ENCODE measurements at regions of chr11 and their contacts with region 1.

Region 1: GRCh38 chr11:4094348-4095291 is at the start of gene RRM1:
- DNase-seq: peak; percentile 88 to 96 (median 94)
- ATAC-seq: peak; percentile 95
- H3K4me3 ChIP-seq: peak within 1 kb of the TSS; percentile 83
- H3K4me3 Mint-ChIP-seq: peak within 1 kb of the TSS; percentile 92 to 99 (median 97)
- H3K27ac ChIP-seq: peak within 1 kb of the TSS; percentile 97
- H3K27ac Mint-ChIP-seq: peak within 1 kb of the TSS; percentile 94 to 99 (median 98)
- H3K4me1 ChIP-seq: peaks cover 46 to 63% of the 10 kb centered on the region in 2 donors
- H3K4me1 Mint-ChIP-seq: peaks cover 63 to 90% (median 84%) of the 10 kb centered on the region in 7 donors
- H3K27me3 ChIP-seq: no peaks in the 10 kb centered on the region
- H3K27me3 Mint-ChIP-seq: no peaks in the 10 kb centered on the region
- total RNA-seq, gene RRM1: 33.6 to 140 (median 40.3) TPM

Region 2: GRCh38 chr11:3841426-3842350 is 252.9 kb before region 1 on chr11:
- CTCF ChIA-PET with region 1: interaction called, 4 read pairs
- POLR2A ChIA-PET with region 1: interaction called, 3 read pairs
- intact Hi-C with region 1: loop called (anchors 1 kb)
- DNase-seq: peak; percentile 82 to 98 (median 95)
- ATAC-seq: peak; percentile 84
- H3K4me3 ChIP-seq: peak overlapping the region; percentile 51
- H3K4me3 Mint-ChIP-seq: peak overlapping the region; percentile 76 to 99 (median 91)
- H3K27ac ChIP-seq: peak overlapping the region; percentile 95
- H3K27ac Mint-ChIP-seq: peak overlapping the region; percentile 87 to 99 (median 97)
- H3K4me1 ChIP-seq: peaks cover 30 to 34% of the 10 kb centered on the region in 2 donors
- H3K4me1 Mint-ChIP-seq: peaks cover 19 to 64% (median 54%) of the 10 kb centered on the region in 7 donors
- H3K27me3 ChIP-seq: no peaks in the 10 kb centered on the region
- H3K27me3 Mint-ChIP-seq: no peaks in the 10 kb centered on the region

Region 3: GRCh38 chr11:3959015-3959919 is 135.4 kb before region 1 on chr11:
- CTCF ChIA-PET with region 1: no interaction called
- POLR2A ChIA-PET with region 1: no interaction called
- intact Hi-C with region 1: no loop called
- DNase-seq: no peak
- ATAC-seq: no peak
- H3K4me3 ChIP-seq: no peak overlapping the region
- H3K4me3 Mint-ChIP-seq: peak overlapping the region in 5 of 10 donors; percentile 7 to 34 (median 26)
- H3K27ac ChIP-seq: no peak overlapping the region
- H3K27ac Mint-ChIP-seq: peak overlapping the region in 4 of 9 donors; percentile 19 to 63 (median 52)
- H3K4me1 ChIP-seq: peaks cover 14 to 35% of the 10 kb centered on the region in 2 donors
- H3K4me1 Mint-ChIP-seq: peaks cover 58 to 93% (median 90%) of the 10 kb centered on the region in 7 donors
- H3K27me3 ChIP-seq: no peaks in the 10 kb centered on the region
- H3K27me3 Mint-ChIP-seq: no peaks in the 10 kb centered on the region

Region 4: GRCh38 chr11:4146070-4146771 is 51.6 kb after region 1 on chr11:
- CTCF ChIA-PET with region 1: no interaction called
- POLR2A ChIA-PET with region 1: no interaction called
- intact Hi-C with region 1: no loop called
- DNase-seq: no peak
- ATAC-seq: no peak
- H3K4me3 ChIP-seq: no peak overlapping the region
- H3K4me3 Mint-ChIP-seq: no peak overlapping the region
- H3K27ac ChIP-seq: no peak overlapping the region
- H3K27ac Mint-ChIP-seq: no peak overlapping the region
- H3K4me1 ChIP-seq: no peaks in the 10 kb centered on the region
- H3K4me1 Mint-ChIP-seq: peaks cover 0 to 2% (median 0%) of the 10 kb centered on the region in 7 donors
- H3K27me3 ChIP-seq: no peaks in the 10 kb centered on the region
- H3K27me3 Mint-ChIP-seq: no peaks in the 10 kb centered on the region

Region 5: GRCh38 chr11:4393209-4393857 is 298.7 kb after region 1 on chr11 and contains the start of gene TRIM21:
- CTCF ChIA-PET with region 1: no interaction called
- POLR2A ChIA-PET with region 1: no interaction called
- intact Hi-C with region 1: loop called in 1 of 2 experiments (anchors 10 kb)
- DNase-seq: peak; percentile 62 to 92 (median 87)
- ATAC-seq: peak; percentile 100
- H3K4me3 ChIP-seq: peak within 1 kb of the TSS; percentile 87
- H3K4me3 Mint-ChIP-seq: peak within 1 kb of the TSS; percentile 88 to 94 (median 90)
- H3K27ac ChIP-seq: peak within 1 kb of the TSS; percentile 89
- H3K27ac Mint-ChIP-seq: peak within 1 kb of the TSS; percentile 68 to 96 (median 93)
- H3K4me1 ChIP-seq: peaks cover 8 to 14% of the 10 kb centered on the region in 2 donors
- H3K4me1 Mint-ChIP-seq: peaks cover 47 to 61% (median 58%) of the 10 kb centered on the region in 7 donors
- H3K27me3 ChIP-seq: no peaks in the 10 kb centered on the region
- H3K27me3 Mint-ChIP-seq: peaks cover 0 to 8% (median 5%) of the 10 kb centered on the region in 5 donors
- total RNA-seq, gene TRIM21: 17.5 to 78.9 (median 29.7) TPM

Region 6: DNA sequence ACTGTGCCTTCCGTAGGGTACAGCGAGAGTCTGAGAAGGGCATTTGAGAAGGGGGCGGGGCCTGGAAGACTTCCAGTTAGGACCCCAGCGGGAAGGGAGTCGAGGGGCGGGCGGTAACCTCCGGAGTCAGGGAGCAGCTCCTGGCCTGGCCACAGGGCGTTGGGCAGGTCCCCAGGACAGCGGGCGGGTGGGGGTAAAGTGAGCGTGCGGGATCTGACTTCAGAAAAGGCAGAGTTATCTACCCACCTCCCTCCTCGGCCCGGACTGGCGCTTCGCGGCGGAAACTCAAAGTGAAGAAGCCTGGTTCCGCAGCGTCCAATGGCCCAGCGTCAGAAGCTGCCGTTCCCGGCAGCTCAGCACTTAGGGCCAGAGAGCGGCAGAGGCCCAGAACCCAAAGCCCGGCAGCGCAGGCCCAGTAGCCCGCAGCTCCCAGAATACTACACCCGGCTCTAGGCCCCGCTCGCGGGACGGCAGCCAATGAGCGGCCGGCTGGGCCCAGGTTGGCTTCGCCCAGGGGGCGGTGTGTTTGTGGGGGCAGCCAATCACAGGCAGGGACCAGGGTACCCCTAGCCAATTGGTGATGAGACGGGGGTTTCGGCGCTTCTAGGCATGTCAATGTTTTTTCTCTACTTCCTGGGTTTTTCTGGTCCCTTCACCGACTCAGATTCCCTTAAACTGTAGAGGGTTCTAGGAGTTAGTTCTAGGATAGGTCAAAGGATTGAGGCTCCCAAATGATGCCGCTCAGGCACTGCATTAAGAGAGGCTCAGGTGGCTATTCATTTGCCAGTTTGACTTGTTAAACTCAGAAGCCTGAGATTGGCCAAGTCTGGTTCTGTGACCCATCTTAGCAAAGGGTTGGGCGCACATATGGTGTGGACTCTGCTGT is 513.4 kb after region 1 on chr11 and contains the start of gene TRIM68:
- CTCF ChIA-PET with region 1: no interaction called
- POLR2A ChIA-PET with region 1: no interaction called
- intact Hi-C with region 1: loop called in 1 of 2 experiments (anchors 2 kb)
- DNase-seq: peak; percentile 87 to 96 (median 94)
- ATAC-seq: peak; percentile 100
- H3K4me3 ChIP-seq: peak within 1 kb of the TSS; percentile 80
- H3K4me3 Mint-ChIP-seq: peak within 1 kb of the TSS; percentile 80 to 97 (median 91)
- H3K27ac ChIP-seq: peak within 1 kb of the TSS; percentile 88
- H3K27ac Mint-ChIP-seq: peak within 1 kb of the TSS; percentile 85 to 96 (median 94)
- H3K4me1 ChIP-seq: peaks cover 15 to 22% of the 10 kb centered on the region in 2 donors
- H3K4me1 Mint-ChIP-seq: peaks cover 29 to 68% (median 56%) of the 10 kb centered on the region in 7 donors
- H3K27me3 ChIP-seq: no peaks in the 10 kb centered on the region
- H3K27me3 Mint-ChIP-seq: peaks cover 0 to 2% (median 0%) of the 10 kb centered on the region in 5 donors
- total RNA-seq, gene TRIM68: 3.8 to 29.5 (median 12.4) TPM